GM23248 (cell line): ENCODE measurements at regions of chr5 and their contacts with region 1.

Region 1: GRCh38 chr5:62457071-62457470 is 44.5 kb downstream of the IPO11 start:
- DNase-seq: peak; percentile 72
- H3K4me3 ChIP-seq: no peak overlapping the region
- H3K27ac ChIP-seq: no peak overlapping the region
- H3K4me1 ChIP-seq: peaks cover 8% of the 10 kb centered on the region; the same call in 1 of the 2 replicates
- H3K27me3 ChIP-seq: no peaks in the 10 kb centered on the region

Region 2: GRCh38 chr5:62779010-62779422 is 321.9 kb after region 1 on chr5:
- in situ Hi-C with region 1: loop called (anchors 10 kb)
- DNase-seq: peak; percentile 81
- H3K4me3 ChIP-seq: no peak overlapping the region
- H3K27ac ChIP-seq: no peak overlapping the region
- H3K4me1 ChIP-seq: no peaks in the 10 kb centered on the region
- H3K27me3 ChIP-seq: no peaks in the 10 kb centered on the region